Activated CD4-positive, alpha-beta T cell treated with anti-CD3 and anti-CD28 coated beads, Interleukin-2, amount 10 ng/mL, durations not matched to agents 7 days and 5 days (primary cell): ENCODE measurements at regions of chr17 and their contacts with region 1.

Region 1: GRCh38 chr17:75784473-75785015 is at the start of gene UNK:
- DNase-seq: peak; percentile 97
- H3K4me3 Mint-ChIP-seq: peak within 1 kb of the TSS; percentile 83
- H3K27ac Mint-ChIP-seq: peak within 1 kb of the TSS; percentile 100
- H3K4me1 Mint-ChIP-seq: peaks cover 46% of the 10 kb centered on the region
- H3K27me3 Mint-ChIP-seq: peaks cover 2% of the 10 kb centered on the region
- total RNA-seq, gene UNK: 27.1 to 28.7 TPM

Region 2: DNA sequence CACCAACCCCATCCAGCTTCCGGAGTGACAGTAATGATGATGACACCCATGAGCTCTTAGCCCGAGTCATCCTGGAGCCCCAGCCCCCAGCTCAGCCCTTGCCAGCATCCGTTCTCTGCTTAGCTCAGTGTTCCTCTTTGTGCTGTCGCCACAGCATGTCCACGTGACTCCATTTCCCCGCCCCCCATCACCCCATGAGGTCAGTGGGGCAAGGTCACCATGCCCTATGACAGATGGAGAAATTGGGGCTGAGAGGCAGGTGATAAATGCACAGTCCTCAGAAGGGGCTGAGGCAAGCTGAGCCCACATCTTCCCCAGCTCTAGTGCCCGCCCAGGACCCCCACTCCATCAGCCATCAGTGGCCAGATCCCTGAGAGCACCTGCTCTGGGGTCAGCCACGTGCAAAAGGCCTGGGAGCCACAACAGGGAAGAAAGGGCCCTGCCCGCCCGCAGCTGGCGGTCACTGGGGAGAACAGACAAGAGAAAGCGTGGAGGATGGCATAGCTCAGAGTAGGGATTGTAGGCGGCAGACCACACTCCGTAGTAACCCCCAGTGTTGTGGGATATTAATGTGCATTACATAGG is 46.2 kb before region 1 on chr17:
- CTCF ChIA-PET with region 1: no interaction called
- POLR2A ChIA-PET with region 1: no interaction called
- DNase-seq: no peak
- H3K4me3 Mint-ChIP-seq: no peak overlapping the region
- H3K27ac Mint-ChIP-seq: peak overlapping the region; percentile 22
- H3K4me1 Mint-ChIP-seq: peaks cover 9% of the 10 kb centered on the region
- H3K27me3 Mint-ChIP-seq: no peaks in the 10 kb centered on the region

Region 3: GRCh38 chr17:75764711-75765421 is 19.7 kb before region 1 on chr17 and contains the start of gene GALK1:
- CTCF ChIA-PET with region 1: interaction called, 64 read pairs
- POLR2A ChIA-PET with region 1: interaction called, 10 read pairs
- DNase-seq: peak; percentile 76
- H3K4me3 Mint-ChIP-seq: peak within 1 kb of the TSS; percentile 77
- H3K27ac Mint-ChIP-seq: peak within 1 kb of the TSS; percentile 71
- H3K4me1 Mint-ChIP-seq: peaks cover 15% of the 10 kb centered on the region
- H3K27me3 Mint-ChIP-seq: no peaks in the 10 kb centered on the region
- total RNA-seq, gene GALK1: 40.9 to 44.7 TPM

Region 4: GRCh38 chr17:75808905-75809715 is 24.6 kb after region 1 on chr17:
- CTCF ChIA-PET with region 1: interaction called, 11 read pairs
- POLR2A ChIA-PET with region 1: no interaction called
- DNase-seq: no peak
- H3K4me3 Mint-ChIP-seq: no peak overlapping the region
- H3K27ac Mint-ChIP-seq: no peak overlapping the region
- H3K4me1 Mint-ChIP-seq: peaks cover 3% of the 10 kb centered on the region
- H3K27me3 Mint-ChIP-seq: no peaks in the 10 kb centered on the region